CD8-positive, alpha-beta memory T cell (primary cell): ENCODE measurements at regions of chr5 and their contacts with region 1.

Region 1: DNA sequence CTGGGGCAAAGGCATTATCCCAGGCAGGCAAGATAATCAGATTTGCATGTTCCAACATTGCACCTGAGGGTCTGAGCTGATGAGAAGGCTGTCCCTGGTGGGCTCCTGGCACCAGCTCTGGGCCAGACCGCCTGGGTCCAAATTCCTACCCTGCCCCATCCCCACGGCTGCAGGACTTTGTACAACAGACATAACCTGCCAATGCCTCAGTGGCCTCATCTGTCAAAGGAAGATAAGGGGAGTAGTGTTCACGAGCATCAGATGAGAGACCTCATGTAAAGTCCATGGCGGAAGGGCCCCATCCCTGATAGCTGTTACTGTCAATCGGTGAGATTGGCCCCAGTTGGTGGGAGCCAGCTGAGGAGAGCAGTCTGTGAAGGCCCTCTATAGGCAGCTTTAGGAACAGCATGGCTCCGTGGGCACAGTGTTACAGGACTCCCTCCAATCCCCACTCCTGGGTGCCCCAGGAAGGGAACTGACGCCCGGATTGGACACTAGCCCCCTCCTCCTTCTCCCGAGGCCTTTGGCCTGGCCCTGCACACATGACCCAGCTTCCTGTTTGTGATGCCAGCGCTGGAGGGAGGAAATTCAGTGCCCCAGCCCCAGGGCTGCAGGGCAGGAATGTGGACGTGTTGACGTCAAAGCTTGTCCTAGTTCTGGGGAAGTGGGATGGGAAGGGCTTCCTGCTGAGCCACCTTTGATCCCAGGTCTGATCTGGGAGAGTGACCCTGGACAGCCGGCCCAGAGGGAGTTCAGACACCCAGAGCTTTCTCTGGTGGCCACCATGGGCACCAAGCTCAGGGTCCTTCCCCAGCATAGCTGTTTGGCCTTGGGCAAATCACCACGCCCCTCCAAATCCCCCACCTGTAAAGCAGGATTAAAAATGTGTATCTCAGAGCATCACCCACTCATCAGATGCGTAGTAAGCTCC is 56.2 kb downstream of the DUSP1 start:
- DNase-seq: peak; percentile 50 to 74 (median 52)
- H3K4me3 ChIP-seq: no peak overlapping the region
- H3K4me3 Mint-ChIP-seq: peak overlapping the region in 1 of 7 donors; percentile 1
- H3K27ac ChIP-seq: no peak overlapping the region
- H3K27ac Mint-ChIP-seq: peak overlapping the region in 6 of 8 donors; percentile 12 to 82 (median 59)
- H3K4me1 ChIP-seq: peaks cover 12% of the 10 kb centered on the region
- H3K4me1 Mint-ChIP-seq: peaks cover 15 to 20% (median 18%) of the 10 kb centered on the region in 3 donors
- H3K27me3 ChIP-seq: no peaks in the 10 kb centered on the region
- H3K27me3 Mint-ChIP-seq: peaks cover 2 to 21% of the 10 kb centered on the region in 2 donors

Region 2: DNA sequence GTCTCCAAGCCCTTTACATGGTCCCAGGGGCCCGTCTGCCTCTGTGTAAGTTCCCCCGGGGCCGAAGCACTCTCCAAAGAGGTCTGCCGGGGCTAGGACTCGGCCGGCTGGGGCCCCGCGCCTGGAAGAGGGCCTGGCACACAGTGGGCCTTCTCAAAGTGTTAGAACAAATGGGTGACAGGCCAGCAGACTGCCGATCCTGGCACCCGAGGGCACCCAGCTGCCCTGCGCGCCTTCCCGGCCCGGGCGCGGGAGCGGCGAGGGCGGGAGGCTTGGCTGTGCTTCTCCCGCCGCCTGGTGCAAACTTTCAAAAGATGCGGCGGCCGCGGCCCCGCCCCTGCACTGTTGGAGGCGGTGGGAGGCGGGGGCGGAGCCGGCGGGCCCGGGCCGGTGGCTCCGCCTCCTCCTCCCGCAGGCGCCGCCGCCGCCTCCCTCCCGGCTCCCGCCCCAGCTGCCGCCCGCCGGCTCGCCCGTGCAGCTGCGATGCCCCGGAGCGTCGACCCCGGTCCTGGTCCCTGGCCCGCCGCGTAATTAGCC is 73.9 kb before region 1 on chr5 and contains the start of gene NEURL1B:
- CTCF ChIA-PET with region 1: no interaction called
- POLR2A ChIA-PET with region 1: no interaction called
- DNase-seq: peak in 1 of 5 donors; percentile 23
- H3K4me3 ChIP-seq: no peak within 1 kb of the TSS
- H3K4me3 Mint-ChIP-seq: peak within 1 kb of the TSS in 6 of 7 donors; percentile 39 to 84 (median 57)
- H3K27ac ChIP-seq: no peak within 1 kb of the TSS
- H3K27ac Mint-ChIP-seq: no peak within 1 kb of the TSS
- H3K4me1 ChIP-seq: peaks cover 6% of the 10 kb centered on the region
- H3K4me1 Mint-ChIP-seq: peaks cover 4 to 16% (median 6%) of the 10 kb centered on the region in 3 donors
- H3K27me3 ChIP-seq: peaks cover 6% of the 10 kb centered on the region
- H3K27me3 Mint-ChIP-seq: peaks cover 20 to 55% of the 10 kb centered on the region in 2 donors
- total RNA-seq, gene NEURL1B: 0.04 to 0.13 TPM

Region 3: DNA sequence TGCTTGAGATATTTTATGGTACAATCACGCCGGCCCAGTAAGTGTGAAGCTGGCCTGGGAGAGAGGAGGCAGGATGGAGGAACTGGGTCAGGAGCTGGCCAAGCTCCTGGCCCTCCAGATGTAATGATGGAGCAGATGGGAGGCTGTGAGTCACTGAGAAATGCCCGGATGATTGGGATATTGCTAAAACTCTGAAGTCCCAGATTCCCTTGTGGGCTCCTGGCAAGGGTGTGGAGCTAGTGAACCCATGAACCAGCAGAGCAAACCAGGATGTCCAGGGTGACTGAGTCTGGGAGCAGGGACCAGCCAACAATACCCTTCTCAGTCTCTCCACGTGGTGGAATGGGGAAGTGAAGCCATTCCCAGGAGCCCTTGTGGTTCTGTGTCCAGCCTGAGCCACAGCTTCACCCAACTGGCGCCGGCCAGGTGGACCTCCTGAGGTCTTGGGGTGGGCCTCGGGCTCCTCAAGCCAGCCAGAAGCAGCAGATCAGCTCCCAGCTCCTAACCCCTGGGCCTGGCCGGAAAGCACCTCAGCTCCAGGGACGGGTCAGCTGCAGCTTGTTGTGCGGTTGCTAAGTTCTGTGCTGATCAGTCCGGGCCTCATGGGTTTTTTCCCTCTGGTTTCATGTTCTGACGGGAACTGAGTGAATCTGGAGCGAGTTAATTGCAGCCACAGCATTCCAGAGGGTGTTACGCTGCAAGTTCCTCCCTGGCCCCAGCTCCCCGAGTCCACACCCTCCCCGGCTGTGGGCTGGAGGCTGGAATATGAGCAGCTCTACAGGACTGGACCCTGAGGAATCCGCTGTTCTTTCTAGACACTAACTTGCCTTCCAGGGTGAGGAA is 18.6 kb after region 1 on chr5:
- CTCF ChIA-PET with region 1: interaction called, 11 read pairs
- POLR2A ChIA-PET with region 1: no interaction called
- DNase-seq: no peak
- H3K4me3 ChIP-seq: no peak overlapping the region
- H3K4me3 Mint-ChIP-seq: no peak overlapping the region
- H3K27ac ChIP-seq: no peak overlapping the region
- H3K27ac Mint-ChIP-seq: peak overlapping the region in 3 of 8 donors; percentile 17 to 68 (median 25)
- H3K4me1 ChIP-seq: no peaks in the 10 kb centered on the region
- H3K4me1 Mint-ChIP-seq: peaks cover 0 to 5% (median 0%) of the 10 kb centered on the region in 3 donors
- H3K27me3 ChIP-seq: no peaks in the 10 kb centered on the region
- H3K27me3 Mint-ChIP-seq: no peaks in the 10 kb centered on the region

Region 4: DNA sequence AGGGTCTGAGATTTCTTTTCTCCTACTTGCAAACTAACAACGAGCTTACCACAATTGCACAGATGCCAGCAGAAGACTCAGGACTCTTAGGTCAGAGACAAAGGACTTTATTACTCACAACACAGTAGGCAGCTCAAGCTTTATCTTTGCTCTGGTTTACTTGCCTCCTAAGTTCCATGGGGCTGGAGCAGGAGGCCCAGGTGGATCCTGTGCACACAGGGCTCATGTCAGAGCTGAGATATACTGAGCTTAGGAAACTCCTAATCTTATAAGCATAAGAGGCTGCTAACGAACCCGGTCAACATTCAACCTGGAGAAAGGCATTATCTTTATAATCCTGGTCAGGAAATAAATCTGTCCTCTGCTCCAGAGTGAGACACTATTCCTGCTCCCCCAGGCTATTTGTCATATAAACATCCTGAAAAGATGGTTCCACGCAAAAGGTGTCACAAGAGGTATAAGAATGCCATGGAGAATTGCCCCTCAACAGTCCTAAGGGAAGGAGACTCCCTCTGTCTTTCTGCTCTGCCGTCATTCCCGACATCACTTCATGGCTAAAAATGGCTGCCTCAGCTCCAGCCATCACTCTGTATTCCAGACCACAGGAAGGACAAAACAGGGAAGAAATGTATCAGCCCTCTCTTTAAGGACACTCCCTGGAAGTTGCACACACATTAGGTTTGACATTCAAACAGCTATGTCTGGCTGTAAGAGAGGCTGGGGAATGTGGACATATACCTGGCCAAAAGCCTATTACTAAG is 40.0 kb after region 1 on chr5:
- CTCF ChIA-PET with region 1: interaction called, 11 read pairs
- POLR2A ChIA-PET with region 1: no interaction called
- DNase-seq: no peak
- H3K4me3 ChIP-seq: no peak overlapping the region
- H3K4me3 Mint-ChIP-seq: no peak overlapping the region
- H3K27ac ChIP-seq: no peak overlapping the region
- H3K27ac Mint-ChIP-seq: peak overlapping the region in 1 of 8 donors; percentile 29
- H3K4me1 ChIP-seq: peaks cover 3% of the 10 kb centered on the region
- H3K4me1 Mint-ChIP-seq: no peaks in the 10 kb centered on the region
- H3K27me3 ChIP-seq: no peaks in the 10 kb centered on the region
- H3K27me3 Mint-ChIP-seq: peaks cover 11% of the 10 kb centered on the region in 2 donors

Region 5: DNA sequence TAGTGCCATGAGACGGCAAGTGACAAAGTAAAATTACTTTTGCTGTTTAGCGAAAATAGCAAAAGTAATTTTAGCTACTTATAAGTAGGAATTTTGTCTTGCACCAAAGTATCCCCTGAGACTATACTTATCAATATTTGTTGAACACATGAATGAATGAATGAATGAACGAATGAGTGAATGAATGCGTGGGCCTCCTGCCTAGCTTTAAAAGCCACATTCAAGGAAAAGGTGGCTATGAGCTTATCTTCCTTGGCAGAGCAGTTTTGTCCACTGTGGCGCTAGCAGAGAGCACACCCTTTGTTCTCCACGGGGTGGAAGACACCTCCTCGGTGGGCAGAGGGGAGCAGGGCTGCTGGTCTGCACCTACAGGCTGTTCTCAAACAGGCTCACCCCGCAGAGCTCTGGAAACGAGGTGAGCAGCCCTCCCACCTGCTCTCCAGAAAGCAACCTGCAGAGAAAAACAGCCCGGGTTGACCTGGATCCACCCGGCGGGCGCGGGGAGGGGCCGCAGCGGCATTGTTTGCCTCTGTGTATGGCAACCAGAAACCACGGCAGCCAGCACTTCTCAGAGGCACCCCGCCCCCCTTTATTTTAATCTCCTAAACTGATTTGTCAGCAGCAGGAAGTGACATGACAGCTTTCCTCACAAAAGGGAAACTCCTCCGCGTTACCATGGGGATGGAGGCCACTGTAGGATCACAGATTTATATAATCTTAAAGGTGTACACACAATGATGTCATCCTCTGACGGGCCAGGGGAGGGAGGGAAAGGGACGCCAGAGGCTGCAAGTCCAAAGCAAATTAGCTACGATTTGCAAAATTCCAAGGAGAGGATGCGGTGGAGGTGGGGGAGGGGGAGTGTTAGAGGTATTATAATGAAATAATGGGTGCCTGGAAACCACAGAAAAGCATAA is 50.4 kb after region 1 on chr5:
- CTCF ChIA-PET with region 1: interaction called, 74 read pairs
- POLR2A ChIA-PET with region 1: interaction called, 9 read pairs
- DNase-seq: peak; percentile 94 to 99 (median 98)
- H3K4me3 ChIP-seq: peak overlapping the region; percentile 60
- H3K4me3 Mint-ChIP-seq: peak overlapping the region; percentile 80 to 98 (median 94)
- H3K27ac ChIP-seq: peak overlapping the region; percentile 92
- H3K27ac Mint-ChIP-seq: peak overlapping the region; percentile 98 to 100 (median 99)
- H3K4me1 ChIP-seq: peaks cover 41% of the 10 kb centered on the region
- H3K4me1 Mint-ChIP-seq: peaks cover 50 to 65% (median 56%) of the 10 kb centered on the region in 3 donors
- H3K27me3 ChIP-seq: no peaks in the 10 kb centered on the region
- H3K27me3 Mint-ChIP-seq: peaks cover 0 to 23% of the 10 kb centered on the region in 2 donors

Region 6: DNA sequence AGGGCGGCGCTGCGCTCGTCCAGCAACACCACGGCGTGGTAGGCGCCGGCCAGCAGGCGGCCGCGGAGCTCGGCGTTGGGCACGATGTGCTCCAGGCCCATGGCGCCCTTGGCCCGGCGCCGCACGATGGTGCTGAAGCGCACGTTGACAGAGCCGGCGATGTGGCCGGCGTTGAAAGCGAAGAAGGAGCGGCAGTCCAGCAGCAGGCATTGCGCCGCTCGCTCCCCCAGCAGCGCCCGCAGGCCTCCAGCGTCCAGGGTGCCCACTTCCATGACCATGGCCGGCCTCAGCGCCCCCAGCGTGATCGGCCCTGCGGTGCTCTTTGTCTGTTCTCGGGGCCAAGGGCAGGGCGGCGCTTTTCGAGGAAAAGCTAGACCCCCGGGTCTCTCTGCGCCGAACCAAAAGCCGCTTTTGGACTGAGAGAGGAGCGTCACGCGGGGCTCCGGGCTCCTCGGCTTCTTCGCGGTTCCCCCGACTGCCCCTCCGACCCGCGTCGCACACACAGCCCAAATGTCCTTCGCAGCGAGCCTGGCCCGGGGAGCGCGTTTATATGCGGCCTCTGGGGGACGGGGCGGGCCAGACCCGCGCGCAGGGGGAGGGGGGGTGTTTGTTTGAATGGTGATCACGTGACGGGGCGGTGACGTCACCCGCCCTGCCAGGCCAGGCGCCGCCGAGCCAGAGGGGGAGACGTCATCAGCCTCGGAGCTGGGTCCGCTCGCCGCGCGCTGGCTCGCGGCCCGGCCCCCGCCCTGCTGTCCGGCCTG is 56.1 kb after region 1 on chr5 and contains the start of gene DUSP1:
- CTCF ChIA-PET with region 1: interaction called, 74 read pairs
- POLR2A ChIA-PET with region 1: interaction called, 9 read pairs
- DNase-seq: peak; percentile 96 to 100 (median 98)
- H3K4me3 ChIP-seq: peak within 1 kb of the TSS; percentile 87
- H3K4me3 Mint-ChIP-seq: peak within 1 kb of the TSS; percentile 94 to 98 (median 96)
- H3K27ac ChIP-seq: peak within 1 kb of the TSS; percentile 100
- H3K27ac Mint-ChIP-seq: peak within 1 kb of the TSS; percentile 97 to 100 (median 100)
- H3K4me1 ChIP-seq: peaks cover 48% of the 10 kb centered on the region
- H3K4me1 Mint-ChIP-seq: peaks cover 69 to 80% (median 71%) of the 10 kb centered on the region in 3 donors
- H3K27me3 ChIP-seq: no peaks in the 10 kb centered on the region
- H3K27me3 Mint-ChIP-seq: peaks cover 0 to 31% of the 10 kb centered on the region in 2 donors
- total RNA-seq, gene DUSP1: 9.4 to 10.9 TPM

Region 7: GRCh38 chr5:172777881-172778814 is 63.4 kb after region 1 on chr5:
- CTCF ChIA-PET with region 1: interaction called, 74 read pairs
- POLR2A ChIA-PET with region 1: interaction called, 4 read pairs
- DNase-seq: no peak
- H3K4me3 ChIP-seq: peak overlapping the region; percentile 7
- H3K4me3 Mint-ChIP-seq: peak overlapping the region; percentile 45 to 74 (median 68)
- H3K27ac ChIP-seq: peak overlapping the region; percentile 74
- H3K27ac Mint-ChIP-seq: peak overlapping the region; percentile 93 to 99 (median 96)
- H3K4me1 ChIP-seq: peaks cover 35% of the 10 kb centered on the region
- H3K4me1 Mint-ChIP-seq: peaks cover 45 to 49% (median 47%) of the 10 kb centered on the region in 3 donors
- H3K27me3 ChIP-seq: no peaks in the 10 kb centered on the region
- H3K27me3 Mint-ChIP-seq: no peaks in the 10 kb centered on the region

Region 8: DNA sequence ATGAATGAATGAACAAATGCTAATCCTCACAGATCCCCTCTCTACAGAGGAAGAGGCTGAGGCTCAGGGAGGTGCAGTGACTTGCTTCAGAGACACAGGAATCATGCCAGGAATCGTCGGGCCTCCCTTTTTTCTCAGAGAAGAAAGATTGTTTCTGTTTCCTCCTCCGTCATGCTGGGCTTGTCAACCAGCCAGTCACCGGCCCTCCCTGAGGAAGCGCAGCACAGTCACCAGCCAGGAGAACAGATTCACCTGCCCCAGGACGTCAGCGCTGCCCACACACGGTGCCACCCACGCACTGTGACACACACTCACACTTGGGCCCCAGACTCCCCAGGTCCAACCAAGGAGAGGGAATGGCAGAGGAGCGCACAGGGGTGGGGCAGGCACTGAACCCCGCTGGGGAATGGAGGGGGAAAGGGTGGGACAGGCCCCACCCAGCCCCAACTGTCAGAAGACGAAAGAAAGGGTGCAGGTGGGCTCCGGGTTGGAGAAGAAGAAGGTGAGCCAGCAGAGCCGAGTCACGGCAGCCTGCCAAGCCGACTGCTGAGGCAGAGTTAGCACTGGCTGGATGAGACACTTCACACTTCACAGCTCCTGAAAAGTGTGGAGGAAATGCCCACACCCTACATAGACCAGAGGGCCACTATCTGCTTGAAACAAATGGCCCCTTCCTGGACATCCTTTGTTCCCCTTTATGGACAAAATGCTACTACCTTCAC is 105.5 kb after region 1 on chr5:
- CTCF ChIA-PET with region 1: no interaction called
- POLR2A ChIA-PET with region 1: no interaction called
- DNase-seq: no peak
- H3K4me3 ChIP-seq: no peak overlapping the region
- H3K4me3 Mint-ChIP-seq: no peak overlapping the region
- H3K27ac ChIP-seq: no peak overlapping the region
- H3K27ac Mint-ChIP-seq: peak overlapping the region in 2 of 8 donors; percentile 5 to 47
- H3K4me1 ChIP-seq: no peaks in the 10 kb centered on the region
- H3K4me1 Mint-ChIP-seq: no peaks in the 10 kb centered on the region
- H3K27me3 ChIP-seq: no peaks in the 10 kb centered on the region
- H3K27me3 Mint-ChIP-seq: no peaks in the 10 kb centered on the region

Region 9: GRCh38 chr5:172939071-172939470 is 224.3 kb after region 1 on chr5:
- CTCF ChIA-PET with region 1: interaction called, 270 read pairs
- POLR2A ChIA-PET with region 1: no interaction called
- DNase-seq: no peak
- H3K4me3 ChIP-seq: no peak overlapping the region
- H3K4me3 Mint-ChIP-seq: no peak overlapping the region
- H3K27ac ChIP-seq: no peak overlapping the region
- H3K27ac Mint-ChIP-seq: no peak overlapping the region
- H3K4me1 ChIP-seq: no peaks in the 10 kb centered on the region
- H3K4me1 Mint-ChIP-seq: no peaks in the 10 kb centered on the region
- H3K27me3 ChIP-seq: no peaks in the 10 kb centered on the region
- H3K27me3 Mint-ChIP-seq: peaks cover 0 to 1% of the 10 kb centered on the region in 2 donors

Region 10: GRCh38 chr5:173217626-173218397 is 503.1 kb after region 1 on chr5:
- CTCF ChIA-PET with region 1: no interaction called
- POLR2A ChIA-PET with region 1: no interaction called
- DNase-seq: no peak
- H3K4me3 ChIP-seq: no peak overlapping the region
- H3K4me3 Mint-ChIP-seq: no peak overlapping the region
- H3K27ac ChIP-seq: no peak overlapping the region
- H3K27ac Mint-ChIP-seq: no peak overlapping the region
- H3K4me1 ChIP-seq: no peaks in the 10 kb centered on the region
- H3K4me1 Mint-ChIP-seq: no peaks in the 10 kb centered on the region
- H3K27me3 ChIP-seq: no peaks in the 10 kb centered on the region
- H3K27me3 Mint-ChIP-seq: peaks cover 11 to 32% of the 10 kb centered on the region in 2 donors